Right ventricle myocardium inferior (tissue), 1 donor: ENCODE measurements at regions of chr17 and their contacts with region 1.

Region 1: DNA sequence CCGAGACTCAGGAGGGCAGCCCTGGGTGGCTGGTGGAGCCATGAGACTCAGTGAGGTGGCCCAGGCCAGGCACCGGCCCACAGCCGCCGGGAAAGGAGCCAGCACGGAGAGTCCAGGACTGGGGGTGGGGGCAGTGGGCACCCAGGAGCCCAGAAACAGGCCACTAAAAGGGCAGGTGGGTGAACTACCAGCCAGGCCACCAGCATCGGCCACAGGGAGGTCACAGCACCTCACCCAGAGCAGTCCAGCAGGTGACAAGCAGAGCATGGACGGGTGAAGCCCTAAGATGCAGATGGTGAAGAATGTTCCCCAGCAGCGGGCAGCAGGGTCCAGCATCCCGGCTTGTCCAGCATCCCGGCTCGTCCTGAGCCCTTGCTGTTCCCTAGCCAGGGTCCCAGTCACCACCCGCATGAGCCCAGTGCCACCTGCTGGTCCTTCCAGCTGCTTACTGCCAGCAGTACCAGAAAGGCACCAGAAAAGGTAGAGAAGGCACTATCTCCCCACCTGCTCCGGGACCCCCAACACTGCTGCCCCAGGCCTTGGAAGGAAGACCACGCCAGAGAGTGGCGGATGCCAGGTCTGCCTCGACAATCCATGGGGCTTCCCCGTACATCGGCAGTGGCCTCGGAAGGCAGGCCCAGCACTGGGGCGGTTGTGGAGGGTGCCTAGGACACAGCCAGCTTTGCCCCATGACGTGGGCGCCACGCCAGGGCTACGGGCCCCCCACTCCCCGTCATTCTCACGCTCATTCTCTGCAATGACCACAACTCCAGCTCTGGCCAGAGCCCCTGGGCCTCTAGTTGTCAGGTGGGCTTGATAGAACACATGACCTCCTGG is 1.6 kb downstream of the CENPX start:
- DNase-seq: no peak
- ATAC-seq: peak; percentile 15

Region 2: DNA sequence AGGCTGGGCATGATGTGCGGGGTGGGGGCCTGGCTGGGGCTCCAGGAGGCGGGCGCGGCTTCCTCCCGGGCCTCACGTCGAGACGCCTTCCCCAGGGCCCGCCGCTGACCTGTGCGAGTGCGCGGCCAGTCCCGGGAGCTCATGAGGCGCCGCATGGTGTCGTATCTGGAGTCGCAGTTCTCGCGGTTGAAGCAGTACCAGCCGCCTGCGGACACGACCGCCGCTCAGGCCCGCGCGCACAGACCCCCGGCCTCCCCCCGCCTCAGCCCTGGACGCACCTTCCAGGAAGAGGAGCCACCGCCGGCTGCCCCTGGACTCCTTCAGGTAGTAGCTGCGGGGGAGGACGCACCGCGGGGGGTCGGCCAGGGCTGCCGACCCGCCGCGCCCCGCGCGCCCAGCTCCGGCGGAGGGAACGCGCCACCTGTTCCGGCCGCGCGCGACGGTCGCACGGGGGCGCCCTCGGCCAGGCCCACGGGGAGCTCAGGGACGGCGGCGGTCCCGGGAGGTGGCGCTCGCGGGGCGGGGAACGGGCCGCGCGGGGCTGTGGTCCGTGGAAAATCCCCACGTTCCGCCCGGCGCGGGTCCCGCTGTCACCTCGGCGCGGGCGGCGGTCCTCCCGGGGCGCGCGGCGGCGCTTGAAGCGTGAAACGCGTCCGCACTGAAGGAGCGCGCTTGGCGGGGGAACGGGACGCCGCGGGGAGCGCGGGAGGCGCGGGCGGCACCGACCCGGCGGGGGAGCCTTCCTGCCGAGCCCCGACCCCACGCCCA is 61.6 kb before region 1 on chr17:
- intact Hi-C with region 1: loop called (anchors 1 kb)
- DNase-seq: peak; percentile 92
- ATAC-seq: peak; percentile 90